ENCODE measurements at regions of chr5 and their contacts with region 1.

Region 1: DNA sequence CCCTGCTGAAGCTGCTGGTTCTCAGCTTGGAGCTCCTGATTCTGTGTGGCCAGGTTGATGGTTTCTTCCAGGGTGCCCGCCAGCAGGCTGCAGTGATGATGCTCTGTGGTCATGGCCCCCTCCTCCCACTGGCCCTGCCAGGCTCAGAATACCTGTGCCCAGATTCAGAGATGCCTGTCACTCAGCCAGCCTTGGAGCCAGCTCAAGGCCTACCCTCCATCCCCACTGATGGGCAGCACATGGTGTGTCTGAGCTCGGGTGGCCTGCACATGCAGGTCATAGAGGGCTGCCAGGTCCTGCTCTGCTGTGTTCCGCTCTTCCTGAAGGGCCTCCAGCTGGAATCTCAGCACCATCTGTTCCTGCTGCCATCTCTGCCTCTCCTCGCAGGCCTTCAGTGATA is 5.4 kb downstream of the SLC35A4 start:
- DNase-seq: no peak
- H3K4me3 ChIP-seq: no peak overlapping the region
- H3K27ac ChIP-seq: no peak overlapping the region
- H3K4me1 ChIP-seq: peaks cover 21% of the 10 kb centered on the region
- H3K27me3 ChIP-seq: no peaks in the 10 kb centered on the region
- CTCF ChIP-seq: no peak

Region 2: GRCh38 chr5:140336388-140336787 is 233.7 kb before region 1 on chr5:
- CTCF ChIA-PET with region 1: no interaction called
- POLR2A ChIA-PET with region 1: interaction called, 11 read pairs
- intact Hi-C with region 1: no loop called
- DNase-seq: peak in 1 of 2 experiments; percentile 24
- H3K4me3 ChIP-seq: no peak overlapping the region
- H3K27ac ChIP-seq: no peak overlapping the region
- H3K4me1 ChIP-seq: peaks cover 20% of the 10 kb centered on the region
- H3K27me3 ChIP-seq: no peaks in the 10 kb centered on the region
- CTCF ChIP-seq: no peak

Region 3: GRCh38 chr5:140926443-140927227 is 356.6 kb after region 1 on chr5:
- CTCF ChIA-PET with region 1: no interaction called
- POLR2A ChIA-PET with region 1: no interaction called
- intact Hi-C with region 1: no loop called
- DNase-seq: peak; percentile 49 to 88
- H3K4me3 ChIP-seq: peak overlapping the region; percentile 35; the same call in 1 of the 2 replicates
- H3K27ac ChIP-seq: no peak overlapping the region
- H3K4me1 ChIP-seq: no peaks in the 10 kb centered on the region
- H3K27me3 ChIP-seq: no peaks in the 10 kb centered on the region
- CTCF ChIP-seq: peak; percentile 62

Measured in PC-9 (cell line).